Kidney (tissue), 22 donors: ENCODE measurements at regions of chr9 and their contacts with region 1.

Region 1: DNA sequence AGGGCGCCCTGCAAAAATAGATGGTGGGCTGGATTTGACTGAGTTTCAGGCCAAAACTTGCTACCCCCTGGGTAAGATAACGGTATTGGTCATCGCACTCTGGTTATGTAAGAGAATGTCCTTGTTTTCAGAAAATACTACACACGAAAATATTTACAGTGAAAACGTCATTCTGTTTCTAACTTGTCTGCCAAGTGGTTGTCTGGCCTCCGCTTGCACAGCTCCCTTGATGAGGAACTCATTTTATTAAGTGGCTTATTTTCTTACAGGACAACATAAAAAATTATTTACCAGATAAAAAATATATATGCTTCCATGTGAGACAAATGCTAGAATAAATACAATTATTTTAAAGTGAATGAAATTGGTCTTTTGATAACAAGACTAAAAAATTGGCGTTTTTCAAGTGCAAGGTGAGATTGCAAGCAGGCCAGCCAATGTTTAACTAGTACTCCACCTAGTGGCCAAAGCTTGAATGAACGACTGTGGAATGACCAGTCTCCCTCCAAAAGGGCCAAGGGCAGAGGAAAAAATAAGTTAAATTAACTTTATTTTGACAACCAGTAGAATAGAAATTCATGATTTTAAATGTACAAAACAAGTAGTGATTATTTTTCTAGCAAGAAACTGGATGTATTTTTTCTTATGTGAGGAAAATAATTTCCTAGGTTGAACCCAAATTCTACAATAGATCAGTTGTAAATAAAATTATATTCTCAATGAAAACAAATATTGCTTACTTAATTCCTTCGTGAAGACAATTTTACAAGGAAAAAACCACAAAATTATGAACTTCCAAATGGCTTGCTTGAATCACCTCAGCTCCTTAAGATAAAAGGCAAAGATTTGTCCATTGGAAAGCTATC is 93.2 kb downstream of the ZFAND5 start:
- DNase-seq: peak in 4 of 5 donors; percentile 57 to 78 (median 66)
- H3K4me3 ChIP-seq: no peak overlapping the region
- H3K27ac ChIP-seq: no peak overlapping the region
- H3K4me1 ChIP-seq: no peaks in the 10 kb centered on the region
- H3K27me3 ChIP-seq: no peaks in the 10 kb centered on the region
- CTCF ChIP-seq: peak; percentile 77

Region 2: DNA sequence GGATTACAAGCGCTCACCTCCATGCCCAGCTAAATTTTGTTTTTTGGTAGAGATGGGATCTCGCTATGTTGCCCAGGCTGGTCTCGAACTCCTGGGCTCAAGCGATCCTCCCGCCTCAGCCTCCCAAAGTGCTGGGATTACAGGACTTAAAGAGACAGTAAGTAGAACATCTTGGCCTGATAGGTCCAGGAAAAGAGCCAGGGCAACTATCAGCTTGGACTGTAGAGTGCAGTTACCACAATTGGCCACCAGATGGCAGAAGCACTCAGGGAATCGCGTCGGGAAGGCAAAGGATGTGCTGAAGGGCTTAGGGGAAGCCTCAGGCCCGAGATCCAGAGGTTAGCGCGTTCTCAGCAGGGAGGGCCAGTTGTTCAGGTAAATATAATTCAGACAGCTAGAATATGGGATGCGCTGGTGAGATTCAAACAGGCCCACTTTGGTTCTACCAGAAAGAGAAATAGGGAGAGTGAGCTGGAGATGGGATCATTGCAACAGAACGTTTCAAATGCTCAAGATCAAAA is 232.9 kb before region 1 on chr9:
- intact Hi-C with region 1: loop called (anchors 5 kb)
- DNase-seq: peak; percentile 79 to 88 (median 85)
- H3K4me3 ChIP-seq: no peak overlapping the region
- H3K27ac ChIP-seq: no peak overlapping the region
- H3K4me1 ChIP-seq: peaks cover 0 to 8% (median 4%) of the 10 kb centered on the region in 3 donors
- H3K27me3 ChIP-seq: no peaks in the 10 kb centered on the region
- CTCF ChIP-seq: peak; percentile 99

Region 3: DNA sequence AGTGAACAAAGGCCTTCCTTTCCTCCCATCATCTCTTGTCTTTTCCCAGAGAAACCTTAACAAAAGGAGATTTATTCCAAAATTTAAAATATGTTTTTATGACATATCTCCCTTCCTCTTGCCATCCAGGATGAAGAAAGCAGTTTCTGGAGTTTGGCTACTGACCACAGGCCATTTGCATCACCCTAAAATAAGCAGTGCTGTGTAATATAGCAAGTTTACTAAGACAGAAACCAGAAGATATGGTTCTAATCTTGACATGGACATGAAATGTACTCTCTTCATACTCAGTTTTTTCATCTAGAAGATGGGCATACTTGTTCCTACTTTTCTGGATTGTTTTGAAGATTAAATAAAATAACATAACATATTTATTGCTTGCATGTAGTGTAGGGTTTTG is 143.3 kb after region 1 on chr9:
- intact Hi-C with region 1: no loop called
- DNase-seq: no peak
- H3K4me3 ChIP-seq: no peak overlapping the region
- H3K27ac ChIP-seq: no peak overlapping the region
- H3K4me1 ChIP-seq: no peaks in the 10 kb centered on the region
- H3K27me3 ChIP-seq: no peaks in the 10 kb centered on the region
- CTCF ChIP-seq: no peak

Region 4: DNA sequence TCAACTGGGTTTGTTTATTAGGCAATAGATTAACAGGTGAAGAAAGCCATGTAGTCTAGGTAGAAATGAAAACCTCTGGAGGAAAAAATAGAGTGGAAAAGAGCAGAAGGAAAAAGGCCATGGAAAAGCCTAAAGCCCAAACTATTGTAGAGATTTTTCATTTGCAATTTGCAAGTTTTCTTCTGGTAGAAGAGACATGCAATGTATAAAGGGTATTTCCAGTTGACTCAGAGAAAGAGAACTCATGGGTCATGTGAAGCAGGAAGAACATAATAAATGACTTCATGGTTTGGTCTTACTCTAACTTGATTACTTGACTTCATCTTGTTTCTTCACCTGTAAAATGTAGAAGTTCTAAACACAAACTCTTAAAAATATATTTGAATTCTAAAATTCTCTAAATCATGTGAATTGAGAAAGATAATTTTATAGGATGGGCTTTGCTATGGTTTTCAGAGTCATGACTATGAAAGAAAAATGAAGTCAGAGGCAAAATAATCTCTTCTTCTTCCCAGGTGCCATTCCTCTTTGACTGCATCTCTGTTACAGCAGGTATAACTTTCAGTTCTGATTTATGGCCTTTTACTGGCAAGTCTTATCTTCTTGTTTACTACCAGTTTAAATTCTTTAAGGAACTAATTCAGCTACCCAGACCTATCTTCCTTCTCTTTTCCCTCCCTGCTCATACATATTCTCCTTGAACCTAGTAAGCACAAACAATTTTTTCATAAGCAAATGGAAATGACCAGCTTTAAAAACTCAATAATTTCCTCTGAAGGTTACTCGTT is 201.8 kb after region 1 on chr9:
- intact Hi-C with region 1: no loop called
- DNase-seq: no peak
- H3K4me3 ChIP-seq: no peak overlapping the region
- H3K27ac ChIP-seq: no peak overlapping the region
- H3K4me1 ChIP-seq: peaks cover 0 to 8% (median 3%) of the 10 kb centered on the region in 3 donors
- H3K27me3 ChIP-seq: no peaks in the 10 kb centered on the region
- CTCF ChIP-seq: no peak